ENCODE measurements at regions of chr7 and their contacts with region 1.

Region 1: DNA sequence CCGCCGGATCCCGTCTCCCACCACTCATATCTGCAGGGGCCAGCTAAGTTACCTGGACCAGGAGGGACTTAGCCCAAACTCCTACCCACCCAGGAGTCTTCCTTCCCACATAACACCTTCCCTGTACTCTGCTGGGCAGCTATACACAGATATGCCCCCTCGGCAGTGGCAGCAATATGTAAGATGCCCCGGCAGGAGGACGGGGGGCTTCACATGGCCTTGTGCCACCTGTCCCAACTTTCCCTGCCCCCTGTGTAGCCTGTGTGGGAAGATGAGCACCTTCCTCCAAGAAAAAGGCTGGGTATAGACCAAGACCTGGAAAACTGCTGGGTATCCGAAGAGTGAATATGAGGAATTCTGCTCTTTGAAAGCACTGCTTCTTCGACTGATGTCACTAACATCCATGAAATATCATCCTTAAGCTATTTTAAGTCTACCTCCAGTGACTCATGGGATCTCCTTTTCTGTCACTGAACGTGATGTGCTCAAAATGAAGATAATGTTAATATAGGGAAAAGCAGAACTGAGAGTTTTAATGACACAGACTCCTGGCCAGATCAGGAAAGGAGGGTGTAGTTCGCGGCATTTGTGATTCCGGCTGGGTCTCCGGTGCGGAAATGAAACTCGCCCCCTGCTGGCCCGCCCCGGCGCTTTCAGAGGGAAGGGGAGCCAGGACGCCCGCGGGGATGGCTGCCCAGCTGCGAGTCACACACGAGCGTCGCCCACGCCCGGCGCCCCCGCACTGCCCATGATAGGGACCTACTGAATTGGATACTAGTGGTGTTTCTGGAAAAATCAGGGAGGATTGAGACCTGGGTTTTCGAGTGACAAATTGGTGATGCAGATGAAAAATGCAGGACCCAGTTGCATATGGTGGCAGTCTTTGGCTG is 256.9 kb upstream of the NFE2L3 start:
- DNase-seq: peak; percentile 62
- H3K4me3 Mint-ChIP-seq: no peak overlapping the region
- H3K27ac Mint-ChIP-seq: no peak overlapping the region
- H3K4me1 Mint-ChIP-seq: peaks cover 28% of the 10 kb centered on the region
- H3K27me3 Mint-ChIP-seq: peaks cover 4% of the 10 kb centered on the region

Region 2: GRCh38 chr7:26061688-26062150 is 166.6 kb after region 1 on chr7:
- CTCF ChIA-PET with region 1: interaction called, 74 read pairs
- POLR2A ChIA-PET with region 1: interaction called, 3 read pairs
- DNase-seq: peak; percentile 72
- H3K4me3 Mint-ChIP-seq: no peak overlapping the region
- H3K27ac Mint-ChIP-seq: no peak overlapping the region
- H3K4me1 Mint-ChIP-seq: peaks cover 13% of the 10 kb centered on the region
- H3K27me3 Mint-ChIP-seq: peaks cover 26% of the 10 kb centered on the region

Region 3: GRCh38 chr7:26078437-26079336 is 183.5 kb after region 1 on chr7:
- CTCF ChIA-PET with region 1: interaction called, 11 read pairs
- POLR2A ChIA-PET with region 1: no interaction called
- DNase-seq: peak; percentile 73
- H3K4me3 Mint-ChIP-seq: no peak overlapping the region
- H3K27ac Mint-ChIP-seq: no peak overlapping the region
- H3K4me1 Mint-ChIP-seq: peaks cover 5% of the 10 kb centered on the region
- H3K27me3 Mint-ChIP-seq: peaks cover 71% of the 10 kb centered on the region

Region 4: GRCh38 chr7:26284995-26285632 is 390.0 kb after region 1 on chr7:
- CTCF ChIA-PET with region 1: interaction called, 10 read pairs
- POLR2A ChIA-PET with region 1: interaction called, 5 read pairs
- DNase-seq: peak; percentile 26
- H3K4me3 Mint-ChIP-seq: no peak overlapping the region
- H3K27ac Mint-ChIP-seq: no peak overlapping the region
- H3K4me1 Mint-ChIP-seq: peaks cover 4% of the 10 kb centered on the region
- H3K27me3 Mint-ChIP-seq: peaks cover 7% of the 10 kb centered on the region